Activated T-helper 1 cell treated with anti-CD3 and anti-CD28 coated beads, Interleukin-12 subunit alpha, Interleukin-12 subunit beta, Interleukin-2, Interleukin-4 antibody, amounts not matched to agents 30 ng/mL and 10 ng/mL and 1 ng/mL, durations not matched to agents 14 hours and 24 hours and 36 hours (primary cell): ENCODE measurements at regions of chrX and their contacts with region 1.

Region 1: GRCh38 chrX:65595460-65595876 is 60.9 kb upstream of the LAS1L start:
- DNase-seq: peak; percentile 83
- H3K4me3 Mint-ChIP-seq: peak overlapping the region; percentile 65
- H3K27ac Mint-ChIP-seq: peak overlapping the region; percentile 96
- H3K4me1 Mint-ChIP-seq: peaks cover 54% of the 10 kb centered on the region
- H3K27me3 Mint-ChIP-seq: no peaks in the 10 kb centered on the region

Region 2: DNA sequence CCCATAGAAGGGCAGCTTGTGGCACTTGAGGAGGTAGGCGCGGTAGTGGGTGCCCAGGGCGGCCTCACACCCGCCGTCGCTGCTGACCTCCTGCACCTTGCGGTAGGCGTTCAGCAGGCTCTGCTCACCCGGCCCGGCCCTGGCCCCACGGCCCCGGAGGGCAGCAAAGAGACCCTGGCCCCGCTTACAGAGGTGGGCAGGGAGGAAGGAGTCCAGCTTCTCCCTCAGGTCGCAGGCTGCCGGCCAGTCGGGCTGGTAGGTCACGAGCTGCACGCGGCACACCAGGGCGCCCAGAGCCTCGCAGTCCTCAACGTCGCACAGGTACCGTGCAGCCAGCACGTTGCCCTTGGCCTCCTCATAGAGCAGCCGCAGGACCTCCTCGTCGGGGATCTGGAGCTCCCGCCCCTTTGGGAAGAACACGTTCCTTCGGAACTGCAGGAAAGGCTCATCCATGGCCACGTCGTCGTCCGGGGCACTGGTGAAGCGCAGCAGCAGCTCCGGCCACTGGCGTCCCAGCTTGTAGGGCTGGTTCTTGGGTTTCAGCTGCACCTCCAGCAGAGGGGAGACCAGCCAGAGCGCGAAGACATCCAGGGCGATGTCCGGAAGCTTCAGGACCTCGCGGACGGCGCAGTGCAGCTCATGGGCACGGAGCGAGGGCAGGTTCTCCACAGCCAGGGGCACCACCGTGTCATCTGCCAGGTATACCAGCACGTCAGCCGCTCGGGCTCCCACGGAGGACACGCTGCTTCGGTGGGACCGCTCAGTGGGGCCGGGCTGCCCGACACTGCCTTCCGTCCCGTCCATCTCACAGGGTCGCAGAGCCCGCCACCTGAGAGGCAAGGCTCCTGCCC is 43.8 kb before region 1 on chrX:
- intact Hi-C with region 1: no loop called
- DNase-seq: no peak
- H3K4me3 Mint-ChIP-seq: no peak overlapping the region
- H3K27ac Mint-ChIP-seq: no peak overlapping the region
- H3K4me1 Mint-ChIP-seq: no peaks in the 10 kb centered on the region
- H3K27me3 Mint-ChIP-seq: no peaks in the 10 kb centered on the region

Region 3: DNA sequence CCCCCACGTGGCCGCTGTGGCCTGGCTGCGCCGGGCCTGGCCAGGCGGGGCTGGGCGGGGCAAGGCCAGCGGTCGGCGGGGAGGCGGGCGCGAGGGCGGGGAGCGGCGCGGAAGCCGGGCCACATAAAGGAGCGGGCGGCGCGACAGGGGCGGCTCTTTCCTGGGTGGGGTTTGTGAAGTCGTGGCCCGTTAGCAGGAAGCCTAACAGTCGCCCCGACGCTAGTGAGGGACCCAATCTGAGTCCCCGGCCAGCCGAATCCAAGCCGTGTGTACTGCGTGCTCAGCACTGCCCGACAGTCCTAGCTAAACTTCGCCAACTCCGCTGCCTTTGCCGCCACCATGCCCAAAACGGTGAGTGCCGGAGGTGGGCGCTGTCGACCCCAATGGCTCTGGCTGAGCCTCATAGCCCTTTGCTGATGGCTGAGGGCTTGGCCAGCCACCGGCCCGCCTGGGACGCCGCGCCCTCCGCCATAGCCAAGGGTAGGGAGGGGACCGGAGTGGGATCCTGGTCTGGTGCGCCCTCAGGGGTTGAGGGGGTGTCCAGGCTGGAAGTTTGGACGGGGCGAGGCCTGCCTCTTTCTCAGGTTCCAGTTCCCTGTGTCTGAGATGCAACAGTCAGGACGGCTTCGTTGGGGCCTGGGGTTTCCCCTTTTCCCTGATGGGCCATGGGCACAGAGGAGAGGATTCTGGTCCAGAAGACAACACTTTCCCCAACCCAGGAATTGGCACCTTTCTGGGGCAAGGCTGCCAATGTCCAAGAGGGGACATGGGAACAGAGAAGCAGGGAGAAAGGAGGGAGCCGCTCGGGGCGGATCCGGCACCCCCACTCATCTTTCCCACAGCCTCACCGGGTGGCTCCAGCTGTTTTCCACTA is 72.3 kb after region 1 on chrX and contains the start of gene MSN:
- intact Hi-C with region 1: loop called (anchors 1 kb)
- DNase-seq: peak; percentile 74
- H3K4me3 Mint-ChIP-seq: peak within 1 kb of the TSS; percentile 98
- H3K27ac Mint-ChIP-seq: peak within 1 kb of the TSS; percentile 97
- H3K4me1 Mint-ChIP-seq: peaks cover 43% of the 10 kb centered on the region
- H3K27me3 Mint-ChIP-seq: no peaks in the 10 kb centered on the region
- total RNA-seq, gene MSN: 479 and 484 TPM in 2 replicates

Region 4: GRCh38 chrX:65723706-65724105 is 128.2 kb after region 1 on chrX:
- intact Hi-C with region 1: loop called (anchors 1 kb)
- DNase-seq: peak; percentile 34
- H3K4me3 Mint-ChIP-seq: peak overlapping the region; percentile 0
- H3K27ac Mint-ChIP-seq: peak overlapping the region; percentile 76
- H3K4me1 Mint-ChIP-seq: peaks cover 82% of the 10 kb centered on the region
- H3K27me3 Mint-ChIP-seq: no peaks in the 10 kb centered on the region

Region 5: DNA sequence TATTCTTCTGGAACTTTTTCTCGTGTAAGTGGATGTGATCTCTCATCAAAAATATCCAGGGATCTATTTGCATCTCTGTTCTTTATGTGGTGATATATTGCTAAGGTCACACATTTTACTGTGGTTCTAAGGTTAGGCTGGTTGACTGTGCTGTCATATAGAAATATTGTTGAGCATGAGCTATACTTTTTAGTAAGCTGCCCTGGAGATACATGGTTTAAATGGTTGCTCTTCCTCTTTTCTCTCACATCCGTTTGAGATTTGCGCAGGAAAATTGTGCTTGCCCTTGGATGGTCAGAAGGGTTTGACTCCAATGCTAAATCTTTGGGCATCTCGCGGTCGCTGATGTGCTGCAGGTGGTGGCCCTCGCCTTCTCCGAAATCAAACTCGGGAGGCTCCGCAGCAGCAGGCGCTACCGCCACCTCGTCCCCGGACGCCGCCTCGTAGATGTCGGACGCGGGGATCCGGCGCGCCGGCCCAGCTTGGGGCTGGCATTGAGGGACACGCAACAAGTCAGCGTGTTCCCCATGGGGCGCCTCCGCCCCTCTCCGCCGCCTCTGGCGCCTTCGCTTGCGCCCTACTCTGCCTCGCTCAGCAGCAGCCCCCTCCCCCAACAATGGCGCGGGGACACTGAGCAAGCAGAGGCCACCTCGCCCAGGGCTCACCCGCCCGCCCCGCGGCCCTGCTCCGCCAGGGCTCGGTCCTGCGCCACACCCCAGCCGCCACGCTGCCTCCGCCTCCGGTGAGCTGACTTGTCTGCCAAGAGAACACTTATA is 226.4 kb after region 1 on chrX:
- intact Hi-C with region 1: loop called (anchors 2 kb)
- DNase-seq: peak; percentile 5
- H3K4me3 Mint-ChIP-seq: peak overlapping the region; percentile 69
- H3K27ac Mint-ChIP-seq: no peak overlapping the region
- H3K4me1 Mint-ChIP-seq: peaks cover 15% of the 10 kb centered on the region
- H3K27me3 Mint-ChIP-seq: peaks cover 9% of the 10 kb centered on the region

Region 6: DNA sequence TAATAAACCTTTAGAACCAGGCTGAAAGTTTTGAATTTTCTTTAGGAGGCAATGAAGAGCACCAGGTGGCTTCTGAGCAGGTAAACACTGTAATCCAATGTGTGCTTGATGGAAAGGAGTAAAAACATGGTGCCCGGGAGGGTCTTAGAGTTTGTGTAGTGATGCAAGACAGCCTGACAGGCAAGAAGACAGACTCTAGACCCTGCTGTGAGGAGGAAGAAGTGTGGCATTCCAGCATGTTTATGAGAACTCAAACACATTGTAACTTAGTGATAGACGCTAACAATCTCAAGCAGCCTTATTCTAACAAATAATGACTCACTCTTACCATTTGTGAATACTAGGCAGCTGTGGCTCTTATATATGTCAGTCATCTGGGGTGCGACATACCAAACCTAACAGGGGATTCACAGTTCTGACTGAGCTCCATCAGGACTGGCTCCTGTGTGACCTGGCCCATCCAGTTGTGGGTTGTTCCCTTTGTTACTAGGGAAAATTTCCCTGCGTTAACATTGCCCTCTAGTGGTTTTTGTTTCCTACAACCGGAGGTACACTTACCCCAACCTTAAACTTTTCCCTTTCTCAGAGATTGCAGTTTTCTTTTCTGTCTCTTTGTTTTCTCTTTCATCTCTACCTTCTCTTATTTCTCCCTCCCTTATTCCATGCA is 390.6 kb after region 1 on chrX:
- intact Hi-C with region 1: loop called (anchors 1 kb)
- DNase-seq: peak; percentile 37
- H3K4me3 Mint-ChIP-seq: peak overlapping the region; percentile 5
- H3K27ac Mint-ChIP-seq: peak overlapping the region; percentile 83
- H3K4me1 Mint-ChIP-seq: peaks cover 21% of the 10 kb centered on the region
- H3K27me3 Mint-ChIP-seq: peaks cover 2% of the 10 kb centered on the region